ENCODE measurements at regions of chr3 and their contacts with region 1.

Region 1: GRCh38 chr3:31768479-31769123 is 212.5 kb downstream of the OSBPL10 start:
- DNase-seq: peak; percentile 33
- ATAC-seq: no peak
- H3K4me3 ChIP-seq: no peak overlapping the region
- H3K4me3 Mint-ChIP-seq: no peak overlapping the region
- H3K27ac ChIP-seq: no peak overlapping the region
- H3K27ac Mint-ChIP-seq: peak overlapping the region; percentile 60
- H3K4me1 ChIP-seq: peaks cover 0 to 9% of the 10 kb centered on the region in 2 donors
- H3K4me1 Mint-ChIP-seq: peaks cover 70% of the 10 kb centered on the region
- H3K27me3 ChIP-seq: no peaks in the 10 kb centered on the region
- H3K27me3 Mint-ChIP-seq: no peaks in the 10 kb centered on the region
- CTCF ChIP-seq: peak; percentile 19

Region 2: GRCh38 chr3:31550452-31551251 is 217.9 kb before region 1 on chr3:
- CTCF ChIA-PET with region 1: interaction called, 3 read pairs
- POLR2A ChIA-PET with region 1: interaction called, 7 read pairs
- intact Hi-C with region 1: loop called (anchors 2 kb)
- DNase-seq: peak; percentile 51
- ATAC-seq: peak; percentile 33
- H3K4me3 ChIP-seq: no peak overlapping the region
- H3K4me3 Mint-ChIP-seq: no peak overlapping the region
- H3K27ac ChIP-seq: peak overlapping the region in 1 of 2 donors; percentile 52
- H3K27ac Mint-ChIP-seq: peak overlapping the region; percentile 73
- H3K4me1 ChIP-seq: peaks cover 10 to 18% of the 10 kb centered on the region in 2 donors
- H3K4me1 Mint-ChIP-seq: peaks cover 63% of the 10 kb centered on the region
- H3K27me3 ChIP-seq: no peaks in the 10 kb centered on the region
- H3K27me3 Mint-ChIP-seq: no peaks in the 10 kb centered on the region
- CTCF ChIP-seq: peak; percentile 82

Measured in B cell (primary cell).